ENCODE measurements at regions of chr3 and their contacts with region 1.

Region 1: DNA sequence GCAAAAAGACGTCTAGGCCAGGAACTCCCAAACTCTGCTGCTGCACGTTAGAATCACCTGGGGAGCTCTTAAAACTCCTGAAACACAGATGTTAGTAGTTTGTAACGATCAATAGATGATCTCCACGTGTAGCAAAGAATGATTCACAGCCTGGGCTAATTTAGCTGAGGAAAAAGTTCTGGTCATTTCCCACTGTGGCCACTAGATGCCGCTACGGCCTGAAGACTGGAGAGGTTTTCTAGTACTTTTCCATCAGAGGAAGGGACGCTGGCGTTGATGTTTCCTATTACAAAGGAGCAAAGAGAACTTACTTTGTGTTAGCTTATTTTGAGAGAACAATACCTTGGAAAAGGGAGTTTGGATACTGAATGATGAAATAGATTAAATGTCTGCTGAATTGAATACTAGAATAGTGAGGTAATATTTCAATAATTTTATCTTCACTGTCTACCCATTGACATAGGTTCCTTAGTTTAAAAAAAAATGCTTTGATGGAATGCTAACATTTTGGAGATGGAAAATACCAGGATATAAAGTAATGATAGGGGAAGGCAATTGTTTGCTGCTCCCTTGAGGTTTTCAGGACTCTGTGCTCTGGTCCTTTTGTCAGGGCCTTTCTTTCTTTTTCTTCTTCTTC is 159.1 kb downstream of the P3H2 start:
- DNase-seq: peak in 3 of 4 donors; percentile 58 to 71 (median 60)
- ATAC-seq: peak; percentile 93
- H3K4me3 ChIP-seq: no peak overlapping the region
- H3K27ac ChIP-seq: no peak overlapping the region
- H3K4me1 ChIP-seq: peaks cover 0 to 4% of the 10 kb centered on the region in 2 donors
- H3K27me3 ChIP-seq: peaks cover 0 to 7% of the 10 kb centered on the region in 2 donors
- CTCF ChIP-seq: peak; percentile 79 to 89

Region 2: DNA sequence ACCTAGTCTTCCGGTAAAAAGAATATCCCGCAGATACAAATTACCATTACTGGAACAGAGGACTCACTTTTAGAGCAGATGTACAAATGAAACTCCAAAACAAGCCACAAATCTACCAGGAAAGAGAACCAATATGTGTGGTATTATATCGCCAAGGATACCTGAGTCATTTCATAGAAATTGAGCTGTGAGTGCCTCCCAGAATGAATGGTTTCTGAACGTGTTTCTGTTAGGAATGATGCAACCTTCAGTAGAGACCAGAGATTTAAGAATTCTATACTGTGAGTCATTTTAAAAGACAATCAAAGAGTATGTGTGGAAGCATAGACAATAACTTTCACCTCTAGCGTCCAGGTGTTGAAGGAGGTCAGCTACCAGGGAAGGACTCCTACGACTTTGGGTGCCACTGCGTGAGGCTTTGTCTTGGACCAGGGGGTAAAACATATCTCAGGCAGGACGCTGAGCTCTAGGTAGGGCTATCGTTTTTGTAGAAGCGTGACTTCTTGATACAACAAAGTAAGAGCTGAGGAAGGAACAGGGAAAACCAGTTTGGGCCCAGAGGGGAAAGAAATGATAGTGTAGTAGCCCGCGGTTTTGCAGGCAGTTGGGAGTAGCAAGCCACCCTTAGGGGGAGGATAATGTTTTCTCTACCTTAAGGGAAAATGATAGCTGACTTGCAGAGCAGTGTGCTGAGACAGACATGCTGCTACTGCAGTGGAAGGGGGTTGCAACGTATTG is 120.0 kb before region 1 on chr3:
- intact Hi-C with region 1: no loop called
- DNase-seq: peak in 1 of 4 donors; percentile 28
- ATAC-seq: no peak
- H3K4me3 ChIP-seq: no peak overlapping the region
- H3K27ac ChIP-seq: no peak overlapping the region
- H3K4me1 ChIP-seq: no peaks in the 10 kb centered on the region
- H3K27me3 ChIP-seq: no peaks in the 10 kb centered on the region
- CTCF ChIP-seq: no peak

Region 3: DNA sequence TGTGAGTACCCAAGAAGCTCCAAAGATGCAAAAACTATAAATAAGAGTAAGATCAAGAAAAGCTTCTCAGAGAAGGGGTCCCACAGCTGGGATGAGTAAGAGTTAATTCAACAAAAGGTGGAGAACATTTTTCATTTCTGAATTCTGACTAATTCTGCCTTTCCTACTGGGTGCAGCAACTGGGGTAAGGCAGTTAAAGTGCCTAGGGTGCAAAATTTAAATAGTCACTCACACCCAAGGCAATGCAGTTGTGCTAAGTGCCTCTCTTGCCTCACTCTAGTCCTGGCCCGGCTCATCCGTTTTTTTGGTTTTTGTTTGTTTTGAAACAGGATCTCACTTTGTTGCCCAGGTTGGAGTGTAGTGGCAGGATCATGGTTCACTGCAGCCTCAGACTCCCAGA is 90.2 kb before region 1 on chr3:
- intact Hi-C with region 1: no loop called
- DNase-seq: no peak
- ATAC-seq: no peak
- H3K4me3 ChIP-seq: no peak overlapping the region
- H3K27ac ChIP-seq: no peak overlapping the region
- H3K4me1 ChIP-seq: no peaks in the 10 kb centered on the region
- H3K27me3 ChIP-seq: no peaks in the 10 kb centered on the region
- CTCF ChIP-seq: no peak

Region 4: DNA sequence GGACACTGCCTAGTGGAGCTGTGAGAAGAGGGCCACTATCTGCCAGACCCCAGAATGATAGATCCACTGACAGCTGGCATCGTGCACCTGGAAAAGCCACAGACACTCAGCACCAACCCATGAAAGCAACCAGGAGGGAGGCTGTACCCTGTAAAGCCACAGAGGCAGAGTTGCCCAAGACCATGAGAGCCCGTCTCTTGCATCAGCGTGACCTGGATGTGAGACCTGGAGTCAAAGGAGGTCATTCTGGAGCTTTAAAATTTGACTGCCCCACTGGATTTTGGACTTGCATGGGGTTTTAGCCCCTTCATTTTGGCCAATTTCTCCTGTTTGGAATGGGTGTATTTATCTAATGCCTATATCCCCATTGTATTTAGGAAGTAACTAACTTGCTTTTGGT is 242.6 kb after region 1 on chr3:
- intact Hi-C with region 1: loop called in 1 of 2 experiments (anchors 5 kb)
- DNase-seq: no peak
- ATAC-seq: no peak
- H3K4me3 ChIP-seq: no peak overlapping the region
- H3K27ac ChIP-seq: no peak overlapping the region
- H3K4me1 ChIP-seq: no peaks in the 10 kb centered on the region
- H3K27me3 ChIP-seq: no peaks in the 10 kb centered on the region
- CTCF ChIP-seq: no peak

Measured in left lung (tissue), 14 donors.